HEK293 (cell line): ENCODE measurements at regions of chr20 and their contacts with region 1.

Region 1: GRCh38 chr20:23606652-23607049 is 934 bp upstream of the CST9 start:
- H3K4me3 ChIP-seq: no peak overlapping the region
- H3K27ac ChIP-seq: no peak overlapping the region
- H3K4me1 ChIP-seq: no peaks in the 10 kb centered on the region
- CTCF ChIP-seq: peak; percentile 78

Region 2: GRCh38 chr20:23441850-23442313 is 164.8 kb before region 1 on chr20:
- CTCF ChIA-PET with region 1: interaction called, 84 read pairs
- POLR2A ChIA-PET with region 1: no interaction called
- H3K4me3 ChIP-seq: no peak overlapping the region
- H3K27ac ChIP-seq: no peak overlapping the region
- H3K4me1 ChIP-seq: no peaks in the 10 kb centered on the region
- CTCF ChIP-seq: peak; percentile 71

Region 3: GRCh38 chr20:23568320-23568970 is 38.2 kb before region 1 on chr20 and contains the start of gene CST9L:
- CTCF ChIA-PET with region 1: interaction called, 12 read pairs
- POLR2A ChIA-PET with region 1: no interaction called
- H3K4me3 ChIP-seq: no peak within 1 kb of the TSS
- H3K27ac ChIP-seq: no peak within 1 kb of the TSS
- H3K4me1 ChIP-seq: no peaks in the 10 kb centered on the region
- CTCF ChIP-seq: no peak